Natural killer cell (primary cell): ENCODE measurements at regions of chr17 and their contacts with region 1.

Region 1: DNA sequence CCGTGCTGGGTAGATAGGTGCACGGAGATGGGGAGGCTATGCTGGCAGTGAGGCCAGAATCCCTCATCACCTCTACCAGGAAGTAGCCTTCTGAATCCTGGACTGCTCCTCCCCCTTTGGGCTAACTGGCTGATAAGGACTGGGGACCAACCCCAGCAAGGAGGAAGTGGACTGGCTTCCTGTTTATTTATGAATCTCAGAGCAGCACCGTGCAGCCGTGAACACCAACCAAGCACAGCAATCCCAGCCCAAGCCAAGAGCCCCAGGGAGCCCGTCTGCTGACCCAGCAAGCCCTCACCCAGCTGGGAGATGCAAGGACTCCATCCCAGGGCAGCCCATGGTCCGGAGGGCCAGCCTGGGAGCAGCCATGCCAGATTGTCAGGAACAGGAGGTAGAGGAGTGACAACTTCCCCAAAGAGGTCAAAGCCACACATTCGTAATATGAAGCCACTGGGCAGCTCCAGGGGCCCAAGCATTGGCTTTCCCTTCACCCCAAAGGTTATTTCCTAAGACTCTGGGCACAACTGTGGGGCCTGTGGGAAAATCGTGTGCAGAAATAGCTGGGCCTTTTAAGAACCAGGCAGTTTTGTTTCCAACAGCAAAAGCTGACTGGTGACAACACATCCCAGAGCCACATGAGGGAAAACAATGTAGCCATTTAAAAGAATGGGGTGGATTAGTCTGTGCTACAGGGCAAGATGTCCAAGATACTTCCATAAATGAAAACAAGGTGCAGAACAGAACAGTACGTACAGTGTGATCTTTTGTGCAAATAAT is 23.9 kb downstream of the PHB1 start:
- DNase-seq: peak in 1 of 2 donors; percentile 46
- ATAC-seq: peak in 2 of 3 donors; percentile 8 to 58
- H3K4me3 ChIP-seq: no peak overlapping the region
- H3K4me3 Mint-ChIP-seq: peak overlapping the region; percentile 89
- H3K27ac ChIP-seq: peak overlapping the region; percentile 90
- H3K27ac Mint-ChIP-seq: peak overlapping the region; percentile 97 to 98
- H3K4me1 ChIP-seq: peaks cover 68% of the 10 kb centered on the region
- H3K4me1 Mint-ChIP-seq: peaks cover 52 to 56% of the 10 kb centered on the region in 2 donors
- H3K27me3 ChIP-seq: no peaks in the 10 kb centered on the region
- H3K27me3 Mint-ChIP-seq: no peaks in the 10 kb centered on the region
- CTCF ChIP-seq: no peak

Region 2: GRCh38 chr17:49117587-49118230 is 273.0 kb before region 1 on chr17:
- intact Hi-C with region 1: no loop called
- DNase-seq: no peak
- ATAC-seq: no peak
- H3K4me3 ChIP-seq: no peak overlapping the region
- H3K4me3 Mint-ChIP-seq: no peak overlapping the region
- H3K27ac ChIP-seq: no peak overlapping the region
- H3K27ac Mint-ChIP-seq: no peak overlapping the region
- H3K4me1 ChIP-seq: no peaks in the 10 kb centered on the region
- H3K4me1 Mint-ChIP-seq: no peaks in the 10 kb centered on the region
- H3K27me3 ChIP-seq: peaks cover 7% of the 10 kb centered on the region
- H3K27me3 Mint-ChIP-seq: peaks cover 24 to 64% of the 10 kb centered on the region in 2 donors
- CTCF ChIP-seq: no peak

Region 3: DNA sequence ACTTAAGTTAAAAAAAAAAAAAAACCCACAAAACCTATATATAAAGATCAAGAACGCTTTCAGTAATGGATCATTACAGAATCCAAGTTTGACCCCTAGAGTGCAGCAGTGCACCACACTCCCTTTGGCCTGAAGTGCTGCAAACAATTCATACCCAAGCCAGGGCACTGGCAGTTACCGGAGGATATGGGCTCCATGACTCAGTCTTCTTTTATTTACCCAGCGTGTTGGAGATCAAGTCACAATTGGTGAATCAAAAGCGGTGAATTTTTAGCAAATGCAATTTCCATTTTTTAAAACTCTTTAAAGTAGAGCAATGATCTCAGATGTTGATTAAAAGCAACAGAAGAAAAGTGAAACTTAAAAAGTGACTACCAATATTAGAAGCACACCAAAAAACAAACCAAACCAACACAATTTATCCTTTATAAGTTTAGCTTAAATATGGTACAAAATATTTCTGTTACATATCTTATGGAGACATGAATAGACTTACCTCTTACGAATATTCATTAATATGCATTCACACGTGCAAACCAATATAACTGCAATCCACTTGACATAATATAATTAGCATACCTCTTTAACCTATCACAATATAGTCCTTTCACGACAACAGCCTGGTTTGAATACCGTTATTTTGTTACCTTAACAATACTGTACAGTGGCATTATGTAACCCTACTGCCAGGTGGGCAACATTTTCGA is 75.0 kb before region 1 on chr17:
- intact Hi-C with region 1: loop called (anchors 1 kb)
- DNase-seq: peak; percentile 66 to 91
- ATAC-seq: peak; percentile 99
- H3K4me3 ChIP-seq: peak overlapping the region; percentile 21
- H3K4me3 Mint-ChIP-seq: peak overlapping the region; percentile 83
- H3K27ac ChIP-seq: peak overlapping the region; percentile 26
- H3K27ac Mint-ChIP-seq: peak overlapping the region; percentile 10 to 72
- H3K4me1 ChIP-seq: peaks cover 15% of the 10 kb centered on the region
- H3K4me1 Mint-ChIP-seq: peaks cover 25 to 32% of the 10 kb centered on the region in 2 donors
- H3K27me3 ChIP-seq: no peaks in the 10 kb centered on the region
- H3K27me3 Mint-ChIP-seq: no peaks in the 10 kb centered on the region
- CTCF ChIP-seq: peak; percentile 95

Region 4: DNA sequence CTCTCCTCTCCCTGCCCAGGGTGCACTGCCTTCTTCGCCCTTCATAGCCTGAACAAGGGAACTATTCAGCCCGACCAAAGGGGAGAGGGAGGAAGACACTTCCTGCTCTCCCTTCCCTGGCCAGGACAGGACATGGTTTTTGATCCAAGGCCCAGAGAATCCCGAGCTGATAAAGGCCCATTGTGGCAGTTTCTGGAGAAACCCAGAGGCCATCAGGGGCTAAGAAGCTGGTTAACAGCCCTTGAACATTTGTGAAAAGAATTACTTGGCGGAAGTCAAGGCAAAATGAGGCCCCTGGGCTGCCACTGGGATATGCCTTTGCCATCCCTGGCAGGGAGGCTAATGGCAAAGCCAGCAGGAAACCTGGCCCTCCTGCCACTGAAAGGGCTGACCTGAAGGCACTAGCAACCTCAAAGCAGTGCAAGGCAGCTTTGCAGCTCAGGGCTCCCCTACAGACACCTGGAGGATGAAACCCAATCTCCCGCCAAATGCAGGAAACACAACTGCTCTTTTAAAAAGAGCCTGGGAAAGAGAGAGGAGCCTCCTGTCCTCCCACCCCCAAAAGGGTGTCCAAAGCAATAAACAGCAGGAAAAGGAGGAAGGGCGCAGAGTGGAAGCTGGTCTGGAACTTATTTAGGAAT is 11.4 kb after region 1 on chr17:
- intact Hi-C with region 1: loop called (anchors 2 kb)
- DNase-seq: no peak
- ATAC-seq: no peak
- H3K4me3 ChIP-seq: no peak overlapping the region
- H3K4me3 Mint-ChIP-seq: no peak overlapping the region
- H3K27ac ChIP-seq: no peak overlapping the region
- H3K27ac Mint-ChIP-seq: peak overlapping the region; percentile 94
- H3K4me1 ChIP-seq: peaks cover 45% of the 10 kb centered on the region
- H3K4me1 Mint-ChIP-seq: peaks cover 45 to 50% of the 10 kb centered on the region in 2 donors
- H3K27me3 ChIP-seq: no peaks in the 10 kb centered on the region
- H3K27me3 Mint-ChIP-seq: no peaks in the 10 kb centered on the region
- CTCF ChIP-seq: no peak